ENCODE measurements at regions of chr13 and their contacts with region 1.

Region 1: DNA sequence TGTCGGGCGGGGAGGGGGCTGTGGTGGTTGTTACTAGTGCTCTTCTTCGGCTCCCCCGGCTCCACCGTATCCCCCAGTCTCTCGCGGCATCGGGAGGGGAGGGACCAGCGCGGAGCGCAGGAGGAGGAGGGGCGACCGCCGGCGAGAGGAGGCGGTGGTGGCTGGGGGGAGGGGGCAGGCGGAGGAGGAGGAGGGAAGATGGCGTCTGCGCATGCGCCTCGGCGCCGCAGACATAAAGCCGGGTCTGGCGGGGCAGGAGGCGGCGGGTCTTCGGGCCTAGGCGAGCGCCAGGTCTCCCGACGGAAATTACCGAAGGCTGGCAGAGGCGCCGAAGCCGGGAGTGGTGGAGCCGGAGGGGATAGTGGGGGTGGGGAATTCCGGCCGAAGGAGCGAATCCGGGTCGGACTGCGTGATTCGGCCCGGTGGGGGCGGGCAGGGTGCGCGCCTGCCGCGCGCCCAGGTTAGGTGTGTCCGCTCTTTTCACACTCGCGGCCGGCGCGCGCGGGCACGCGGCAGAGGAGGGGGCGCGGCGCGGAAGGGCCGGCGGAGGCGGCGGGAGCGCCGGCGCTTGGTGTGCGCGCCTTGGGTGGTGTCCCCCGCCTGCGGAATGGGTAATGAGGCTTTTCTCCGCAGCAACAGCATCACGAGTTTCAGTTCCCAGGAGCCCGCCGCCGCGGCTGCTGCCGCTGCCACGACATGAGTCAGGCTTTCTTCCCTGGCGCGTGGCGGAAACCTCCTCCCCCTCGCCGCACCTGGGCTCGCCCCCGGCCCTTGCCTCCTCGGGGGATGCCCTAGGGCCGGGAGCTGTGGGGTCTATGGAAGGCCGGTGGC is 1.3 kb upstream of the TSC22D1 start:
- DNase-seq: peak; percentile 95
- H3K4me3 Mint-ChIP-seq: peak overlapping the region; percentile 95
- H3K27ac Mint-ChIP-seq: peak overlapping the region; percentile 88
- H3K4me1 Mint-ChIP-seq: peaks cover 34% of the 10 kb centered on the region
- H3K27me3 Mint-ChIP-seq: peaks cover 2% of the 10 kb centered on the region

Region 2: GRCh38 chr13:42991892-42992763 is 1585.3 kb before region 1 on chr13 and contains the start of gene EPSTI1:
- CTCF ChIA-PET with region 1: no interaction called
- intact Hi-C with region 1: loop called (anchors 2 kb)
- DNase-seq: peak; percentile 84
- H3K4me3 Mint-ChIP-seq: peak within 1 kb of the TSS; percentile 87
- H3K27ac Mint-ChIP-seq: peak within 1 kb of the TSS; percentile 98
- H3K4me1 Mint-ChIP-seq: peaks cover 52% of the 10 kb centered on the region
- H3K27me3 Mint-ChIP-seq: no peaks in the 10 kb centered on the region
- total RNA-seq, gene EPSTI1: 17.4 to 19.8 TPM

Region 3: DNA sequence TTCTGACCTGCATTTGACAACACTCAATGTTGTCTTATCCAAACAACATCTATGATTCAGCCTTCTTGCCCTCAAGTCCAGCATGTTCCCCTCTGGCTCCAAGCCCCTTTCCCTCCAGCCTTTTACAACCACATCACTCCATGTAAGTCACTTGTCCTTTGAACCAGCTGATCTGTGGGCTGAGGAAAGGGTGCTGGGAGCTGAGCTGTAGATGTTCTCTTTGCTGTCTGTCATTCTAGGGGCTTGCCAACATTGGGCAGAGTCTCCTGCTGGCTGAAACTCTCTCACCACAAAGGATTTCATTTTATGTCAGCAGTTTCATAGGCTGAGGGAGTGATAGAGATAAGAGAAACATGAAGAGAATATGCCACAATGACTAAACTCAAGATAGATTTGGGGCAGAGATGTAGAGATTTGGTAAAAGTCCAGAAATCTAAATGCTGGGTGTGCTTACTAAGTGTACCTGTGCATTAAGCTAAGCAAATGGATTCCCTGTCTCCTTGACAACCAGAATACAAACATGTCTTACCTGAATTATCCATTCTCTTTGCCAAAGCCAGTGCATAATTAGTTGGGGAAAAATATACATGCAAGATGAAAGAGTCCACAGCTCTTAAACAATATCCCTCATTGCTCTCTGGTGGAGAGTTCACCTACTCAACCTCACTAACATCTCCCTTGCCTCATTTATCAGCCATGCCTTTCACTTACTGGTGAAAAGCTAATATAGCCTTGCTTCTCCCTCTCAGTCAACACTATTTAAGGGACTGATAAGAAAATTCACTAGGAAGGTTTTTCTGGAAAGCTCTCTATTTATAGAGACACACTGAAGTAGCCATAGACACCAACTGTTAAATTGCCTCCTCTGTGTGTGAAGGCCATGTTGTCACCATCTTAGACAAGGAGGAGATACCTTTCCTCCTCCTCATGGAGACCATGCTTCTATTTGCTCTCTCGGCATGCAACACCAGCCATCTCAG is 379.4 kb before region 1 on chr13:
- CTCF ChIA-PET with region 1: no interaction called
- intact Hi-C with region 1: loop called (anchors 5 kb)
- DNase-seq: peak; percentile 65
- H3K4me3 Mint-ChIP-seq: no peak overlapping the region
- H3K27ac Mint-ChIP-seq: no peak overlapping the region
- H3K4me1 Mint-ChIP-seq: peaks cover 36% of the 10 kb centered on the region
- H3K27me3 Mint-ChIP-seq: peaks cover 6% of the 10 kb centered on the region

Region 4: DNA sequence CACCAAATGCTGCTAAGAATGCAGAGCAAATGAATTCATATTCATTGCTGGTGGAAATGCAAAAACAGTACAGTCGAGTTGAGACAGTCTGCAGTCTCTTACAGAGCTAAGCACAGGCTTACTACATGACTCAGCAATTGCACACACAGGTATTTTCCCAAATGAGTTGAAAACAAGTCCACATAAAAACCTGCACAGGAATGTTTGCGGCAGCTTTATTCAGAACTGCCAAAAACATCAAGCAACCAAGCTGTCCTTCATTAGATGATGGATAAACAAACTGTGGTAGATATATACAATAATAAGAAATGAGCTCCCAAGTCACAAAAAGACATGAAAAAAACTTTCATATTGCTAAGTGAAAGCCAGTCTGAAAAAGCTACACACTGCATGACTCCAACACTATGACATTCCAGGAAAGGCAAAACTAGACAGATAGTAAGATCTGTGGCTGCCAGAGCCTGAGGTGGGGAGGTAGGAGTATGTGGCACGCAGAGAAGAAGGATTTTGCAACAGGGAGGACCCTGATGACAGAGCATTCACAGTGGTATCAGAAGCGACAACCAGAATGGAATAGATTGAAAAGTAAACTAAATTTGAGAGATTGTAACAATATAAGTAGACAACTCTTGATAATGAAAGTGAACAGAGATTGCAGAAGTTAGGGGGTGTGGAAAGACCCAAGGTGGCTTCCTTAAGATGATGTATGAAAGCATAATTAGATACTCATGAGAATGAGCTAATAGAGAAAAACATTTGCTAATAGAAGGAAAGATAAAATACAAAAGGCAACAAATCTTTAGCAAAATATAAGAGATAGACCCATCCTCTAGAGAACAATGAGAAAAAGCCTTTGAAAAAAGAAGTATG is 54.1 kb before region 1 on chr13:
- CTCF ChIA-PET with region 1: no interaction called
- intact Hi-C with region 1: loop called (anchors 2 kb)
- DNase-seq: peak; percentile 7
- H3K4me3 Mint-ChIP-seq: no peak overlapping the region
- H3K27ac Mint-ChIP-seq: no peak overlapping the region
- H3K4me1 Mint-ChIP-seq: no peaks in the 10 kb centered on the region
- H3K27me3 Mint-ChIP-seq: no peaks in the 10 kb centered on the region

Region 5: DNA sequence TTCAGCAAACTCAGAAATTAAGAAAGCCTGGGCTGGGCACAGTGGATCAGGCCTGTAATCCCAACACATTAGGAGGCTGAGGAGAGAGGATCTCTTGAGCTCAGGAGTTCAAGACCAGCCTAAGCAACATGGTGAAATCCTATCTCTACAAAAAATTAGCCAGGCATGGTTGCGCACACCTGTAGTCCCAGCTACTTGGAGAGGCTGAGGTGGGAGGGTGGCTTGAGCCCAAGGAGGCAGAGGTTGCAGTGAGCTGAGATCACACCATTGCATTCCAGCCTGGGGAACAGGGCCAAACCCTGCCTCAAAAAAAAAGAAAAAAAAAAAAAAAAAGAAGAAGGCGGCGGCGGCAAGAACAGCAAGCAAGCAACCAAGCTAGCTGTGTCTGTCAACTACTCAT is 28.0 kb before region 1 on chr13:
- CTCF ChIA-PET with region 1: no interaction called
- intact Hi-C with region 1: no loop called
- DNase-seq: no peak
- H3K4me3 Mint-ChIP-seq: no peak overlapping the region
- H3K27ac Mint-ChIP-seq: no peak overlapping the region
- H3K4me1 Mint-ChIP-seq: no peaks in the 10 kb centered on the region
- H3K27me3 Mint-ChIP-seq: no peaks in the 10 kb centered on the region

Region 6: GRCh38 chr13:44815623-44816022 is 238.2 kb after region 1 on chr13:
- CTCF ChIA-PET with region 1: no interaction called
- intact Hi-C with region 1: loop called (anchors 1 kb)
- DNase-seq: peak; percentile 66
- H3K4me3 Mint-ChIP-seq: no peak overlapping the region
- H3K27ac Mint-ChIP-seq: no peak overlapping the region
- H3K4me1 Mint-ChIP-seq: peaks cover 20% of the 10 kb centered on the region
- H3K27me3 Mint-ChIP-seq: peaks cover 17% of the 10 kb centered on the region

Region 7: GRCh38 chr13:45119991-45120864 is 542.8 kb after region 1 on chr13 and contains the start of gene GTF2F2:
- CTCF ChIA-PET with region 1: no interaction called
- intact Hi-C with region 1: loop called (anchors 2 kb)
- DNase-seq: peak; percentile 88
- H3K4me3 Mint-ChIP-seq: no peak within 1 kb of the TSS
- H3K27ac Mint-ChIP-seq: no peak within 1 kb of the TSS
- H3K4me1 Mint-ChIP-seq: peaks cover 9% of the 10 kb centered on the region
- H3K27me3 Mint-ChIP-seq: no peaks in the 10 kb centered on the region
- total RNA-seq, gene GTF2F2: 21.3 to 22.4 TPM

Region 8: DNA sequence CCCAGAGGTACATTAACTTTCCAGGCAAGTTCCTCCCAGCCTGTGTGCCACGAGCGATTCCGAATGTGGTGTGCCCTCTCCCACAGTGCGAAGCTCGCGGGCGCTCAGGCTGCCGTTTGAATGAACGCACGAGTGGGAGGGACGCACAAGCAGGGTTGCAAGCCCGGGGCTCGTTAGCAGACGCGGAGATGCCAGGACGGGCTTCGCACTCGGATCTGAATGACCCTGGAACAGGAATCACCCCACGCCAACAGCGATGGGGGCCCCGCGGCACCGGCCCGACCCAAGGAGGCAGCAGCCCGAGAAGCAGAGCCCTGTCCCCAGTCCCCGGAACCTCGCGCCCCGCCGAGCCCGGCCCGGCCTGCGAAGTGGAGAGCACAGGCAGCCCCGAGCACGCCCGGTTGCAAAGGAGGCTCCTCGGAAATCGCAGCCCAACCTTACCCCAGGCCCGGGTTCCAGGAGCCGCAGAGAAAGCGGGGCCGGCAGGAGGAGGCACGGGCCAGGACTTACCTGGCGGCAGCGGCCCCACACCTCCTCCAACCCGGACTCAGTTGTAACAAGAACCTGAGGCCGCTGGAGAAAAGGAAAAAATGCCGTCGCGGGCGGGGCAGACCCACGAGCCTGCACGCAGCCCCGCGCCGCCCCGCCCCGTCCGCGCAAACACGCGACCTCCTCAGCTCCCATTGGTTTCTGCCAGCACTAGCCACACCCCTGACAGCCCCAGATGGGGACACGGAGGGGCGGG is 840.5 kb after region 1 on chr13 and contains the start of gene SLC25A30:
- CTCF ChIA-PET with region 1: no interaction called
- intact Hi-C with region 1: loop called (anchors 5 kb)
- DNase-seq: peak; percentile 89
- H3K4me3 Mint-ChIP-seq: peak within 1 kb of the TSS; percentile 94
- H3K27ac Mint-ChIP-seq: peak within 1 kb of the TSS; percentile 92
- H3K4me1 Mint-ChIP-seq: peaks cover 24% of the 10 kb centered on the region
- H3K27me3 Mint-ChIP-seq: no peaks in the 10 kb centered on the region
- total RNA-seq, gene SLC25A30: 13.6 to 15.1 TPM

Measured in activated naive CD4-positive, alpha-beta T cell treated with anti-CD3 and anti-CD28 coated beads for 36 hours (primary cell).